Activated T-helper 1 cell treated with anti-CD3 and anti-CD28 coated beads, Interleukin-12 subunit alpha, Interleukin-12 subunit beta, Interleukin-2, Interleukin-4 antibody, amounts not matched to agents 30 ng/mL and 10 ng/mL and 1 ng/mL, durations not matched to agents 14 hours and 24 hours and 36 hours (primary cell): ENCODE measurements at regions of chr6 and their contacts with region 1.

Region 1: GRCh38 chr6:87154993-87155841 is at the start of gene ZNF292:
- DNase-seq: peak; percentile 97
- H3K4me3 Mint-ChIP-seq: peak within 1 kb of the TSS; percentile 93
- H3K27ac Mint-ChIP-seq: peak within 1 kb of the TSS; percentile 98
- H3K4me1 Mint-ChIP-seq: peaks cover 50% of the 10 kb centered on the region
- H3K27me3 Mint-ChIP-seq: no peaks in the 10 kb centered on the region
- total RNA-seq, gene ZNF292: 50.1 and 51.7 TPM in 2 replicates

Region 2: GRCh38 chr6:85678602-85679444 is 1476.4 kb before region 1 on chr6:
- intact Hi-C with region 1: loop called (anchors 1 kb)
- DNase-seq: peak; percentile 98
- H3K4me3 Mint-ChIP-seq: peak overlapping the region; percentile 100
- H3K27ac Mint-ChIP-seq: peak overlapping the region; percentile 92
- H3K4me1 Mint-ChIP-seq: peaks cover 47% of the 10 kb centered on the region
- H3K27me3 Mint-ChIP-seq: no peaks in the 10 kb centered on the region

Region 3: DNA sequence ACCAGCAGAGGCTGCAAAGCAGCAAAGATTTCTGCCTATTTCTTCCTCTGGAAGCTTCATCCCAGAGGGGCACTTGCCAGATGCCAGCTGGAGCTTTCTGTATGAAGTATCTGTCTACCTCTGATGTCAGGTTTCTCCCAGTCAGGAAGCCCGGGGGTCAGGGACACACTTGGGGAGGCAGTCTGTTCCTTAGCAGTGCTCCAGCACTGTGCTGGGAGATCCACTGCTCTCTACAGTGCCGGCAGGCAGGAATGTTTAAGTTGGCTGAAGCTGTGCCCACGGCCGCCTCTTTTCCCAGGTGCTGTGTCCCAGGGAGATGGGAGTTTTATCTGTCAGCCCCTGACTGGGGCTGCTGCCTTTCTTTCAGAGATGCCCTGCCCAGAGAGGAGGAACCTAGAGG is 849.0 kb before region 1 on chr6:
- intact Hi-C with region 1: no loop called
- DNase-seq: no peak
- H3K4me3 Mint-ChIP-seq: no peak overlapping the region
- H3K27ac Mint-ChIP-seq: no peak overlapping the region
- H3K4me1 Mint-ChIP-seq: no peaks in the 10 kb centered on the region
- H3K27me3 Mint-ChIP-seq: no peaks in the 10 kb centered on the region

Region 4: GRCh38 chr6:87059943-87060342 is 95.3 kb before region 1 on chr6:
- intact Hi-C with region 1: no loop called
- DNase-seq: no peak
- H3K4me3 Mint-ChIP-seq: no peak overlapping the region
- H3K27ac Mint-ChIP-seq: no peak overlapping the region
- H3K4me1 Mint-ChIP-seq: no peaks in the 10 kb centered on the region
- H3K27me3 Mint-ChIP-seq: peaks cover 8% of the 10 kb centered on the region

Region 5: DNA sequence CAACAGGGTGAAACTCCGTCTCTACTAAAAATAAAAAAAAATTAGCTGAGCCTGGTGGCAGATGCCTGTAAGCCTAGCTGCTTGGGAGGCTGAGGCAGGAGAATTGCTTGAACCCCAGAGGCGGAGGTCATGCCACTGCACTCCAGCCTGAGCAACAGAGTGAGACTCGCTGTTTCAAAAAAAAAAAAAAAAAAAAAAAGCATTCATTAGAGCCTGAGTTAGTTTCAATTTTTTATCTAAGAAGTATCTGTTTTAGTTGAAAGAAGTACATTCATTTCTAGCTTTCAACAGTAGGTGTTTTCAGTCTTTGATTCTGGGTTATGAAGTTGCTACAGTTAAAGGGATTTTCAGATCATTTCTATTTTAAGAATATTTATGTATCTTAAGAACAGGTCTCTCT is 42.3 kb after region 1 on chr6:
- intact Hi-C with region 1: loop called (anchors 1 kb)
- DNase-seq: no peak
- H3K4me3 Mint-ChIP-seq: no peak overlapping the region
- H3K27ac Mint-ChIP-seq: no peak overlapping the region
- H3K4me1 Mint-ChIP-seq: peaks cover 53% of the 10 kb centered on the region
- H3K27me3 Mint-ChIP-seq: no peaks in the 10 kb centered on the region

Region 6: GRCh38 chr6:87237804-87238203 is 82.6 kb after region 1 on chr6:
- intact Hi-C with region 1: loop called (anchors 1 kb)
- DNase-seq: no peak
- H3K4me3 Mint-ChIP-seq: no peak overlapping the region
- H3K27ac Mint-ChIP-seq: no peak overlapping the region
- H3K4me1 Mint-ChIP-seq: peaks cover 11% of the 10 kb centered on the region
- H3K27me3 Mint-ChIP-seq: no peaks in the 10 kb centered on the region

Region 7: DNA sequence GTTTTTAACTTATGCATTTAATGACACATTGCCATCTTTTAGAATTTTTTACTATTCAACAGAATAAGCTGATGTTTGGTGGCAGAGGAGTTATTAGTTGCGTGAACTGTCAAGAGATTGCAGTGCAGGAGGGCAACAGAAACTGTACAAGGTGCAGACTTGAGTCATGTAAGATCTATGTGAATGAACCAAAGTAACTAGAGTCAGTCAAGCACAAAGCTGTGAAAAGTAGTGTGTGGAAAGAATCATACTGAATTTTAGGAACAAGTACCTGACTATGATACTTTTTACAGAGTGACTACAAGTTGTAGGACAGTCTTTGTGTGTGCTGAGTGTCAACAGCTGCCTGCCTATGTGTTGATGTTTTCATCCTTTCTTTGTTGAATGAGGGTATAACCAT is 186.7 kb after region 1 on chr6:
- intact Hi-C with region 1: no loop called
- DNase-seq: no peak
- H3K4me3 Mint-ChIP-seq: no peak overlapping the region
- H3K27ac Mint-ChIP-seq: no peak overlapping the region
- H3K4me1 Mint-ChIP-seq: no peaks in the 10 kb centered on the region
- H3K27me3 Mint-ChIP-seq: no peaks in the 10 kb centered on the region

Region 8: DNA sequence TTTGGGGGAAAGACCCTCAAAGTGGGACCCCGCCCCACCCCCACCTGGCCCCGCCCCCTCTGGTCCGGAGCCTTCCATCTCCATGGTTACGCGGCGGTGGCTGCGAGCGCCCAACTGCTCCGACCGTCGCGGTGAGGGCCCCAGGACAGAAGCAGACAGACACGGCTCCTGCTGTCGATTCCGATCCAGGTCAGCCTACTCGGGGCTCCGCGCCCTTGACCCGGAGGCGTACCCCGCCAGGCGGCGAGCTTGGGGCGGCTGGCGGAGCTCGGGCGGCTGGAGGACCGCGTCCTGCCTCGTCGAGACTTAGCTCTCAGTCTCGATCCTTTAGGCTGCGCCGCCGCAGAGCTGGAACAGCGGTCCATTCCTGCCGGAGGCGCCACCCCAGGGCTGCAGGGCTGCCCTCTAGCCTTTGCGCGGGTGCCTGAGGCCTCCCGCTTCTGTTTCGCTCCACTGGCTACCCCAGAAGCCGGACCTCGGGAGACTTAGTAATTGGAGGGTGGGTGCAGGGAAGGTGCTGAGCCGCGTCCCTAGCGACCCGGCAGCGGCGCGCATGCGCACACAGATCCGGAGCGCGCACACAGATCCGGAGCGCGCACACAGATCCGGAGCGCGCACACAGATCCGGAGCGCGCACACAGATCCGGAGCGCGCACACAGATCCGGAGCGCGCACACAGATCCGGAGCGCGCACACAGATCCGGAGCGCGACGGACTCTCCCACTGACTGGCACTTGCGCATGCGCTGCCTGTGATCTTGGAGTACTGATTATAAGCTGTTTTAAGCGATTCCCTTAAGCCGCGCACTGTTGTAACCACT is 252.9 kb after region 1 on chr6 and contains the start of gene CFAP206:
- intact Hi-C with region 1: loop called (anchors 1 kb)
- DNase-seq: peak; percentile 66
- H3K4me3 Mint-ChIP-seq: peak within 1 kb of the TSS; percentile 84
- H3K27ac Mint-ChIP-seq: peak within 1 kb of the TSS; percentile 76
- H3K4me1 Mint-ChIP-seq: peaks cover 16% of the 10 kb centered on the region
- H3K27me3 Mint-ChIP-seq: peaks cover 28% of the 10 kb centered on the region
- total RNA-seq, gene CFAP206: 0.20 TPM in 1 of 2 replicates, not detected in the other

Region 9: DNA sequence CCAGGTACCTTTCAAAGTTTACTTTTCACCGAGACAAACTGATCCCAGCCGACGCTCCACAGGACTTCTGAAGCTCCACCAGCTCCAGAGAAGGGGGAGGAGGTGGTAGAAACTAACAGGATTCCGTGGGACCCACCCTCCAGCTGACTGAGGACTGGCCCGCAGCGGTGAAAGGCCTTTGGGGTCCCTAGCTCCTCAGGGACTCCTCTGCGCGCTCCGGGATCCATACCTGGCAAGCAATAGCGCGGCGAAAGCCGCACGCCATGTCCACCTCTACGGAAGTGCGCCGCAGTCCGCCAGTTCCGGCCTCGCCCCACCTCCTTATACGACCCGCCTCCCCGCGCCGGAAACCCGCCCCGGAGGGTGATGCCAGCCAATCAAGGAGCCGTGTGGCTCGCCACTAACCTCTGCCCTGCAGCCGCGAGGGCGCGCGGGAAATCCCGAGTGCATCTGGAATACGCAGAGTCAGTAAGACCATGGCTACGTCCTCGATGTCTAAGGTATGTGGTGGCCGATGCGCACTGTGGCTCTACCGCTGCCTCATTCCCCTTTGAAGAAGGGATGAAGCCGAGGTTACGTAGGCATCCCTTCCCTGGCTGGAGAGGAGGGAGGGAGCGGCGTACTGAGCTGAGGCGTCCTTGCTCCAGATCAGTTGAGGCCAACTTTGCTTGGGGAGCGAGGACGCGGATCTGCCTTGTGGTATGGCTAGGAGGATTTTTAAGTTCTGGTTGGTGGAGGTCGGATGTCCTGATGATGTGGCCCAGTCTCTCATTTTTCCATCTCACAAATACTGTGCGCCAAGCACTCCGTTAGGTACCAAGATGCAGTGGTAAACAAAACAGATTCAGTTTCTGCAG is 434.7 kb after region 1 on chr6 and contains the starts of genes ORC3 and RARS2:
- intact Hi-C with region 1: loop called (anchors 1 kb)
- DNase-seq: peak; percentile 96
- H3K4me3 Mint-ChIP-seq: peak within 1 kb of the TSS; percentile 90
- H3K27ac Mint-ChIP-seq: peak within 1 kb of the TSS; percentile 79
- H3K4me1 Mint-ChIP-seq: peaks cover 42% of the 10 kb centered on the region
- H3K27me3 Mint-ChIP-seq: no peaks in the 10 kb centered on the region
- total RNA-seq, gene ORC3: 34.7 and 38.6 TPM in 2 replicates
- total RNA-seq, gene RARS2: 24.6 and 24.7 TPM in 2 replicates

Region 10: DNA sequence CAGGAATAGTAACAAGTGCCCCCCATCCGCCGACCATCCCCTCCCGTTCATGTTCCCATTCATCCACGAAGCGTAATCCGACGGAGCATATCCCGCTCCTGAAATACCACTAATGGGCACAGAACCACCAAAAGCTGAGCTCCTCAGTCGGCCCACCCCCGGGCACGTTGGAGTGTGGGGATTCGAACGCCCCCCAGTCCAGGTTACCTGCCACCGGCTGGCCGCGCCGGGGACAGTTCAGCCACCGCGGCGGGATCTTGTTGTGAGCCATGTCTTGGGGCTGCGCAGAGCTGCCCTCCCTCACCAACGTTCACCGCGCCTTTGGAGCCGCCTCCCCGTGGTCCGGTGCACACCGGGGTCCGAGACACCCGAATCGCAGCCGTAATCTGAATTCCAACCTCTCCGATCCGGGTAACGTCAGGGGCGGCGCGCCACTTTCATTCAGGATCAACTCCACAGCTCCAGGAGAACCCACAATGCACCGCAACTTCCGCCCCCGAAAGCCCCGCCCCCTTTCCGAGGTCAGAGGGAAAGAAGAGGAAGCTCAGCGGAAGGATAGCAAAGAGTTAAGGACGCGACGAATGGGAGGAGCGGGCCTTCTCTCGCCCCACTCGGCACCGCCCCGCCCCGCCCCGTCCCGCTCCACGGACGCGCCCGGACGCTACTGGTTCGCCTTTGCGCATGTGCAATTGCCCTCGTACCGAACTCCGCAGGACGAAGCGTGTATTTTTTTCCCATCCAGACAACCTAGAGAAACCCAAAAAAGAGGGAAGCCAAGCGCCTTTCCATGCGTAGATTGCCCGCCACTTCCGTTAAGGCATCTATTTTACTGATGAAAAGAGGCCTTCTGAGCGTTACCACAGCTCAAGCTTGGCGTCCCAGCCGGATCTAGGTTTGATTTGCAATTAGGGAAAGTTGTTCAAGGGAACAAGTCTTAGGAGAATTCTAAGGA is 1808.2 kb after region 1 on chr6 and contains the start of gene RNGTT:
- intact Hi-C with region 1: loop called (anchors 5 kb)
- DNase-seq: peak; percentile 97
- H3K4me3 Mint-ChIP-seq: peak within 1 kb of the TSS; percentile 98
- H3K27ac Mint-ChIP-seq: peak within 1 kb of the TSS; percentile 84
- H3K4me1 Mint-ChIP-seq: peaks cover 33% of the 10 kb centered on the region
- H3K27me3 Mint-ChIP-seq: peaks cover 7% of the 10 kb centered on the region
- total RNA-seq, gene RNGTT: 21.6 and 25.3 TPM in 2 replicates